ENCODE measurements at regions of chr11 and their contacts with region 1.

Region 1: GRCh38 chr11:65859200-65859811 is 927 bp upstream of the MUS81 start:
- DNase-seq: peak; percentile 87 to 99 (median 95)
- ATAC-seq: peak; percentile 53
- H3K4me3 ChIP-seq: peak overlapping the region; percentile 90
- H3K4me3 Mint-ChIP-seq: peak overlapping the region; percentile 91
- H3K27ac ChIP-seq: peak overlapping the region; percentile 92 to 96
- H3K27ac Mint-ChIP-seq: peak overlapping the region; percentile 94
- H3K4me1 ChIP-seq: peaks cover 78% of the 10 kb centered on the region
- H3K4me1 Mint-ChIP-seq: peaks cover 57% of the 10 kb centered on the region
- H3K27me3 ChIP-seq: no peaks in the 10 kb centered on the region
- H3K27me3 Mint-ChIP-seq: no peaks in the 10 kb centered on the region
- CTCF ChIP-seq: no peak

Region 2: GRCh38 chr11:65652511-65653231 is 206.6 kb before region 1 on chr11:
- CTCF ChIA-PET with region 1: interaction called, 3 read pairs
- POLR2A ChIA-PET with region 1: interaction called, 21 read pairs
- intact Hi-C with region 1: no loop called
- DNase-seq: peak; percentile 92 to 99 (median 96)
- ATAC-seq: peak; percentile 75
- H3K4me3 ChIP-seq: peak overlapping the region; percentile 66
- H3K4me3 Mint-ChIP-seq: peak overlapping the region; percentile 88
- H3K27ac ChIP-seq: peak overlapping the region; percentile 95 to 99
- H3K27ac Mint-ChIP-seq: peak overlapping the region; percentile 97
- H3K4me1 ChIP-seq: peaks cover 60% of the 10 kb centered on the region
- H3K4me1 Mint-ChIP-seq: peaks cover 54% of the 10 kb centered on the region
- H3K27me3 ChIP-seq: no peaks in the 10 kb centered on the region
- H3K27me3 Mint-ChIP-seq: no peaks in the 10 kb centered on the region
- CTCF ChIP-seq: no peak

Region 3: GRCh38 chr11:65833297-65834030 is 25.8 kb before region 1 on chr11 and contains the start of gene SNX32:
- CTCF ChIA-PET with region 1: interaction called, 4 read pairs
- POLR2A ChIA-PET with region 1: interaction called, 20 read pairs
- intact Hi-C with region 1: loop called in 1 of 2 experiments (anchors 2 kb)
- DNase-seq: peak; percentile 88 to 97 (median 93)
- ATAC-seq: peak; percentile 100
- H3K4me3 ChIP-seq: peak within 1 kb of the TSS; percentile 76
- H3K4me3 Mint-ChIP-seq: no peak within 1 kb of the TSS
- H3K27ac ChIP-seq: peak within 1 kb of the TSS; percentile 18 to 31
- H3K27ac Mint-ChIP-seq: no peak within 1 kb of the TSS
- H3K4me1 ChIP-seq: peaks cover 24% of the 10 kb centered on the region
- H3K4me1 Mint-ChIP-seq: peaks cover 6% of the 10 kb centered on the region
- H3K27me3 ChIP-seq: no peaks in the 10 kb centered on the region
- H3K27me3 Mint-ChIP-seq: no peaks in the 10 kb centered on the region
- CTCF ChIP-seq: no peak
- total RNA-seq, gene SNX32: 0.33 to 0.61 TPM

Region 4: DNA sequence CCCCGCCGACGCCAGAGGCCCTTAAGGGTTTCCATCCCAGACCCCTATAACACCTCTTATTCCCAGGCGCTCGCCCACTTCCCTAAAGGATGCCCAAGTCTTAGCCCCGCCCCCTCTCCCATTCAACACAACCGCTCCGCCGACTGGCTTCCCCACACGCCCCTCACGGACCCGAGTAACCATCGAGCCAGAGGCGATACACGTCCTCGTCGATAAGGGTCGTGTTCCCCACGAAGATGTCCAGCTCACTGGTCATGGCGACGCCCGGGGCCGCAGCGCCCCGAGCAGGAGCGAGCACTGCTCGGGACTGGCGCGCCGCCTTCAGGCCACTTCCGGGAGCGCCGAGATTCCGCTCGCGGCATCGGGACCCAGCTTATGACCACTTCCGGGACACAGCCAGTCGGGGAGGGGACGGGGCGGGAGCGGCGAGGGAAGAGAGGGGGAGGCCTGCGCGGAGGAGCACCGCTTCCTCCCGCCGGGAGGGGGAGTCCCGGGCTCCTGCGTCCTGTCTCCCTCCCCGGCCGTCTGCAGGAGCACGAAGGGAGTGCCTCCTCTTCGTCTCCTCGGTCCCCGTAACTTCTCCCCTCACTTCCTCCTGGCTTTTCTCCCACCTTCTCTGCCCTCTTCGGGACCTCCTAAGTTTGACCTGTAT is 29.0 kb after region 1 on chr11 and contains the start of gene FIBP:
- CTCF ChIA-PET with region 1: interaction called, 80 read pairs
- POLR2A ChIA-PET with region 1: interaction called, 248 read pairs
- intact Hi-C with region 1: loop called (anchors 1 kb)
- DNase-seq: peak; percentile 92 to 98 (median 95)
- ATAC-seq: peak; percentile 60
- H3K4me3 ChIP-seq: peak within 1 kb of the TSS; percentile 93
- H3K4me3 Mint-ChIP-seq: peak within 1 kb of the TSS; percentile 87
- H3K27ac ChIP-seq: peak within 1 kb of the TSS; percentile 88 to 91
- H3K27ac Mint-ChIP-seq: peak within 1 kb of the TSS; percentile 95
- H3K4me1 ChIP-seq: peaks cover 68% of the 10 kb centered on the region
- H3K4me1 Mint-ChIP-seq: peaks cover 63% of the 10 kb centered on the region
- H3K27me3 ChIP-seq: no peaks in the 10 kb centered on the region
- H3K27me3 Mint-ChIP-seq: no peaks in the 10 kb centered on the region
- CTCF ChIP-seq: peak; percentile 95
- total RNA-seq, gene FIBP: 19.1 to 19.9 TPM

Region 5: DNA sequence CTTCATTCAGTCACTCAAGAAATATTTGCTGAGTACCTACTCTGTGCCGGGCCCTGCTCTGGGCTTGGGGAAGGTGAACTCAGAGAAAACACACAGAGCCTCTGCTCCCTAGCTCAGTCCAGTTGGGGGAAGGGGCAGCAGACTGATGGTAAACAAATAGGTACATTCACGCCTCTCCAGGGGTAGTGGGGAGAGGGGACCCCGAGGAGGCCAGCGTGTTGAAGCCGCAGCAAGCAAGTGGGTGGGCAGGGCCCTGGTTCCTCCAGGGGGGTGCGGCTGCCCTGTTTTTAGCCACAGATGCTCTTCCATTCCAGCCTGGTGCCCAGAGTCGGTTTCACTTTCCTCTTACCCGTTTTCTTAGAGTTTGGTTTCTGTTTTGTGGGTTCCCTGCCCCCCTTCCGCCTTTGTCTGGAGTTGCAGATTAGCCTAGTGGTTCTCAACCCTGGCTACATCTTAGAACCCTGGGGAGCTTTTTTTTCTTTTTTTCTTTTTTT is 68.6 kb after region 1 on chr11:
- CTCF ChIA-PET with region 1: interaction called, 5 read pairs
- POLR2A ChIA-PET with region 1: interaction called, 11 read pairs
- intact Hi-C with region 1: no loop called
- DNase-seq: peak; percentile 59 to 93 (median 76)
- ATAC-seq: peak; percentile 96
- H3K4me3 ChIP-seq: peak overlapping the region; percentile 39
- H3K4me3 Mint-ChIP-seq: peak overlapping the region; percentile 77
- H3K27ac ChIP-seq: peak overlapping the region; percentile 78 to 81
- H3K27ac Mint-ChIP-seq: peak overlapping the region; percentile 95
- H3K4me1 ChIP-seq: peaks cover 26% of the 10 kb centered on the region
- H3K4me1 Mint-ChIP-seq: peaks cover 30% of the 10 kb centered on the region
- H3K27me3 ChIP-seq: no peaks in the 10 kb centered on the region
- H3K27me3 Mint-ChIP-seq: no peaks in the 10 kb centered on the region
- CTCF ChIP-seq: no peak

Region 6: DNA sequence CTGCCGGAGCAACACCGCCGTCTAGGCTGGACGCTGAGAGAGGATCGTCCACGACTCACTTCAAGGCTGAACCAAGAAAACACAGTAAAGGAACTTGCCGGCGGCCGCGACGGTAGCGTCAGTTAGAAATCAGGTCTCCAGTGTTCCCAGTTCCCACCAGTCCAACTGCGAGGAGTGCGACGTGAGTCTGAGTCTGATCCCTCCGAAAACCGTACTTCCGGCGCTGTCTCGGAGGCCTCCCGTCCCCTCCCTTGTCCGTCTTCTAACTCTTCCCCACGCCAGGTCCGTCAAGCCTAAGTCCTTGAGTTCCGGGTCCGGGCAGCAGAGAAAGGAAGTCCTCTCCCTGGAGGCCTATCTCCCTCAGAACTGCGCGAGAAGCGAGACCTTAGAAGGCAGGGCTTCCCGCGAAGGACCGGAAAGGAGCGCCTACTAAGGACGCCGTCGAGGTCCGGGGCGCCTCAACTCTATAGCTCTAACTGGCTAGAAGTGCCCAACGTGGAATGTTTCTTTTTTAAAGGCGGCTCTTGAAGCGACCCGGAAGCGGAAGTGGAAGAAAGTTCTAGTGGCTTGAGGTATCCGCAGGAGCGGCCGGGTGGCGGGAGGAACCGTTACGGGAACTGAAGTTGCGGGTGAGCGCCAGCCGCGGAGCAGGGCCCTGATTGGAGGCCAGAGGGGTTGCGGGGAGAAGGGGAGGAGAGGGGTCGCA is 142.8 kb after region 1 on chr11 and contains the starts of genes BANF1 and EIF1AD:
- CTCF ChIA-PET with region 1: interaction called, 9 read pairs
- POLR2A ChIA-PET with region 1: interaction called, 33 read pairs
- intact Hi-C with region 1: loop called in 1 of 2 experiments (anchors 1 kb)
- DNase-seq: peak; percentile 84 to 98 (median 89)
- ATAC-seq: peak; percentile 77
- H3K4me3 ChIP-seq: peak within 1 kb of the TSS; percentile 75
- H3K4me3 Mint-ChIP-seq: peak within 1 kb of the TSS; percentile 94
- H3K27ac ChIP-seq: peak within 1 kb of the TSS; percentile 86 to 96
- H3K27ac Mint-ChIP-seq: peak within 1 kb of the TSS; percentile 97
- H3K4me1 ChIP-seq: peaks cover 39% of the 10 kb centered on the region
- H3K4me1 Mint-ChIP-seq: peaks cover 54% of the 10 kb centered on the region
- H3K27me3 ChIP-seq: no peaks in the 10 kb centered on the region
- H3K27me3 Mint-ChIP-seq: no peaks in the 10 kb centered on the region
- CTCF ChIP-seq: no peak
- total RNA-seq, gene BANF1: 21.3 to 22.3 TPM
- total RNA-seq, gene EIF1AD: 88.2 to 94.1 TPM

Measured in CD4-positive, alpha-beta T cell (primary cell).